ENCODE measurements at regions of chr1 and their contacts with region 1.

Region 1: DNA sequence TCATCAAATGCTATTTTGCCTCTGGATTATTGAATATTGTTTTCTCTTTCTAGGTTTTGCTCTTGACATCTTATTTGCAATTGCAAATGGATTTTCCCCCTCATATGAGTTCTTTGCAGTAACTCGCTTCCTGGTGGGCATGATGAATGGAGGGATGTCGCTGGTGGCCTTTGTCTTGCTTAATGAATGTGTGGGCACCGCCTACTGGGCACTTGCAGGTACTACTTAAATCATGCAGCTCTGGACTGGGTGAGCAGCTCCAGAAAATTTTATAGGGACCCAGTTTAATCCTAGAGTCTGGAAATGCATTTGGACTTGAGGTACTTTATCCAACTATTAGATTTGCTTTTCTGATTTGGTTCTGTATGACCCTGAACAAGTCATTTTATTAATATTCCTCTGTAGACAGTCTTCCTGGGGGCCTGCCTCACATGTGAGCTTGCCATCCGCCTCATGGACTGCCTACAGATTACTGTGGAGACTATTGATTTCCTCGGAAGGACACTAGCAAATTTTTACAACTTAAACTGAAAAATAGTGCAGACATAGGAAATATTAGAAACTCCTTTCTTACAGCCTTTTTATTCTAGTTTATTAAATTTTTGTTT is 44.5 kb downstream of the SLC22A15 start:
- DNase-seq: peak; percentile 33 to 63
- H3K4me3 ChIP-seq: no peak overlapping the region
- H3K27ac ChIP-seq: no peak overlapping the region
- H3K4me1 ChIP-seq: no peaks in the 10 kb centered on the region
- H3K27me3 ChIP-seq: no peaks in the 10 kb centered on the region
- CTCF ChIP-seq: peak; percentile 55 to 79 (median 70)
- EP300 ChIP-seq: no peak
- POLR2A ChIP-seq: no peak
- RAD21 ChIP-seq: peak; percentile 71 to 72; a peak in 3 of 4 replicates

Region 2: GRCh38 chr1:115807723-115808122 is 213.0 kb before region 1 on chr1:
- CTCF ChIA-PET with region 1: interaction called, 10 read pairs
- POLR2A ChIA-PET with region 1: no interaction called
- DNase-seq: peak in 1 of 2 experiments; percentile 70
- H3K4me3 ChIP-seq: no peak overlapping the region
- H3K27ac ChIP-seq: no peak overlapping the region
- H3K4me1 ChIP-seq: peaks cover 0 to 6% (median under 1%) of the 10 kb centered on the region in 4 experiments; a peak in 1 of 7 replicates
- H3K27me3 ChIP-seq: no peaks in the 10 kb centered on the region
- CTCF ChIP-seq: peak in 2 of 3 experiments; percentile 66 to 76; a peak in 3 of 4 replicates
- EP300 ChIP-seq: no peak
- POLR2A ChIP-seq: no peak
- RAD21 ChIP-seq: peak; percentile 75 to 83

Region 3: DNA sequence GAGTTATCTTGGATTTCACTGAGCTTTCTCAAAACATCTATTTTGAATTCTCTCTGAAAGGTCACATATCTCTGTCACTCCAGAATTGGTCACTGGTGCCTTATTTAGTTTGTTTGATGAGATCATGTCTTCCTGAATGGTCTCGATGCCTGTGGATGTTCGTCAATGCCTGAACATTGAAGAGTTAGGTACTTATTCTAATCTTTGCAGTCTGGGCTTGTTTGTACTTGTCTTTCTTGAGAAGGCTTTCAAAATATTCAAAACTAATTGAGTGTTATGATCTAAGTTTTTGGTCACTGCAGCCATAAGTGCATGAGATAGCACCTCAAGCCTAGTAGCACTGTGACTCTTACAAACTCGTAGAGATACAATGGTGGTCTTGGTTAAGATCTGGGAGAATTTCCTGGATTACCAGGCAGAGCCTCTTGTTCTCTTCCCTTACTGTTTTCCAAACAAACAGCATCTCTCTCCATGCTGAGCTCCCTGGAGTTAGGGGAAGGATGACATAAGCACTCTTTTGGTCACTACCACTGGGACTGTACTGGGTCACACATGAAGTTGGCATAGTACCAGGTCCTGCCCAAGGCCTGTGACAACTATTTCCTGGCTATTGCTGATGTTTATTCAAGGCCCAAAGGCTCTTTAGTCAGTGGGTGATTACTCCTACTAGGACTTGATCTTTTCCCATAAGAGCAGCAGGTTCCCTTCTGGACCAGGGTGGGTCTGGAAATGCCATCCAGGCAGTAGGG is 18.9 kb before region 1 on chr1:
- CTCF ChIA-PET with region 1: interaction called, 36 read pairs
- POLR2A ChIA-PET with region 1: no interaction called
- DNase-seq: no peak
- H3K4me3 ChIP-seq: no peak overlapping the region
- H3K27ac ChIP-seq: no peak overlapping the region
- H3K4me1 ChIP-seq: peaks cover 0 to 4% (median 2%) of the 10 kb centered on the region in 4 experiments; a peak in 3 of 7 replicates
- H3K27me3 ChIP-seq: no peaks in the 10 kb centered on the region
- CTCF ChIP-seq: no peak
- EP300 ChIP-seq: no peak
- POLR2A ChIP-seq: no peak
- RAD21 ChIP-seq: no peak

Region 4: GRCh38 chr1:116008651-116009390 is 12.0 kb before region 1 on chr1:
- CTCF ChIA-PET with region 1: interaction called, 36 read pairs
- POLR2A ChIA-PET with region 1: no interaction called
- DNase-seq: no peak
- H3K4me3 ChIP-seq: no peak overlapping the region
- H3K27ac ChIP-seq: no peak overlapping the region
- H3K4me1 ChIP-seq: no peaks in the 10 kb centered on the region
- H3K27me3 ChIP-seq: no peaks in the 10 kb centered on the region
- CTCF ChIP-seq: no peak
- EP300 ChIP-seq: no peak
- POLR2A ChIP-seq: no peak
- RAD21 ChIP-seq: no peak

Region 5: DNA sequence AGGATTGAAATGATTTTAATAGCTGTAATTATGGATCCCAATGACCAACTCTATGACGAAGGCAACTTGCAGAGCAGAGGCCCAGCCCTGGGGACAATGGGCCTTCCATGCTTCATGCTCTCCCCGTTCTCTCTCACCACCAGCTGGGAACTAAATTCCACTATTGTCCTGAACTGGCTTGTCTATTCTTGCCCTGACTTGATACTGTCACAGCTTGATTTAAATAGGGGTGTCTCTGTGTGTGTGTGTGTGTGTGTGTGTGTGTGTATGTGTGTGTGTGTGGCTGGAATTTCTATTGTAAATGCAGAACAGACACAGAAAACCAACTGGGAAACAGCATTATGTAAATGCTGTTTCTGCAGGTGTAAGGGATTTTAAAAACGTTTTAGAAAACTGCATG is 12.6 kb after region 1 on chr1:
- CTCF ChIA-PET with region 1: interaction called, 28 read pairs
- POLR2A ChIA-PET with region 1: no interaction called
- DNase-seq: no peak
- H3K4me3 ChIP-seq: no peak overlapping the region
- H3K27ac ChIP-seq: no peak overlapping the region
- H3K4me1 ChIP-seq: no peaks in the 10 kb centered on the region
- H3K27me3 ChIP-seq: no peaks in the 10 kb centered on the region
- CTCF ChIP-seq: no peak
- EP300 ChIP-seq: no peak
- POLR2A ChIP-seq: no peak
- RAD21 ChIP-seq: no peak

Measured in H1 (cell line).